MCF 10A (cell line): ENCODE measurements at regions of chr11 and their contacts with region 1.

Region 1: DNA sequence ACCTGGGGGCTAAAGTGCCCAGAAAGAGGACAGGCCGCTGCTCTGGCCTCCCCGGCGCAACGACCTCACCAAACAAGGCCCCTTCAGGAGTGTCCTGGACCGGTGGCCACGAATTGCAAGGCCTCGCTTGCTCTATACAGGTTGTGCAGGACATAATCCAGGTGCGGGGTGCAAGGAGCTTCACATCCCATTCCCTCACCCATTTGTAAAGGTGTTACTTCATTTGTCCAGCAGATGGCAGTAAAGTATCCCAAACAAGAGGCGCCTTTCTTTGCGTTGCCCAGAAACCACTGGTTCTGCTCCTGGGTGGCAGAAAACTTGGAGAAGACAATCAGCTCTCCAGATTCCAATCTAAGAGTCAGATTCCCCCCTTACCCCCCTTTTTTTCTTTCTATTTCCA is 35.9 kb upstream of the PRDM11 start:
- DNase-seq: peak; percentile 81
- H3K4me3 Mint-ChIP-seq: no peak overlapping the region
- H3K27ac Mint-ChIP-seq: no peak overlapping the region
- H3K4me1 Mint-ChIP-seq: no peaks in the 10 kb centered on the region
- H3K27me3 Mint-ChIP-seq: peaks cover 32% of the 10 kb centered on the region
- CTCF ChIP-seq: peak; percentile 61

Region 2: GRCh38 chr11:45180179-45180842 is 69.7 kb after region 1 on chr11:
- CTCF ChIA-PET with region 1: interaction called, 3 read pairs
- POLR2A ChIA-PET with region 1: no interaction called
- intact Hi-C with region 1: loop called (anchors 5 kb)
- DNase-seq: peak; percentile 48
- H3K4me3 Mint-ChIP-seq: peak overlapping the region; percentile 65
- H3K27ac Mint-ChIP-seq: peak overlapping the region; percentile 47
- H3K4me1 Mint-ChIP-seq: no peaks in the 10 kb centered on the region
- H3K27me3 Mint-ChIP-seq: no peaks in the 10 kb centered on the region
- CTCF ChIP-seq: peak; percentile 32

Region 3: GRCh38 chr11:45217991-45218390 is 107.4 kb after region 1 on chr11:
- CTCF ChIA-PET with region 1: no interaction called
- POLR2A ChIA-PET with region 1: no interaction called
- intact Hi-C with region 1: no loop called
- DNase-seq: no peak
- H3K4me3 Mint-ChIP-seq: no peak overlapping the region
- H3K27ac Mint-ChIP-seq: no peak overlapping the region
- H3K4me1 Mint-ChIP-seq: no peaks in the 10 kb centered on the region
- H3K27me3 Mint-ChIP-seq: no peaks in the 10 kb centered on the region
- CTCF ChIP-seq: no peak

Region 4: GRCh38 chr11:45285930-45286632 is 175.5 kb after region 1 on chr11 and contains the start of gene SYT13:
- CTCF ChIA-PET with region 1: interaction called, 56 read pairs
- POLR2A ChIA-PET with region 1: interaction called, 5 read pairs
- intact Hi-C with region 1: no loop called
- DNase-seq: no peak
- H3K4me3 Mint-ChIP-seq: no peak within 1 kb of the TSS
- H3K27ac Mint-ChIP-seq: no peak within 1 kb of the TSS
- H3K4me1 Mint-ChIP-seq: peaks cover 6% of the 10 kb centered on the region
- H3K27me3 Mint-ChIP-seq: peaks cover 50% of the 10 kb centered on the region
- CTCF ChIP-seq: no peak
- total RNA-seq, gene SYT13: not detected in 2 replicates

Region 5: DNA sequence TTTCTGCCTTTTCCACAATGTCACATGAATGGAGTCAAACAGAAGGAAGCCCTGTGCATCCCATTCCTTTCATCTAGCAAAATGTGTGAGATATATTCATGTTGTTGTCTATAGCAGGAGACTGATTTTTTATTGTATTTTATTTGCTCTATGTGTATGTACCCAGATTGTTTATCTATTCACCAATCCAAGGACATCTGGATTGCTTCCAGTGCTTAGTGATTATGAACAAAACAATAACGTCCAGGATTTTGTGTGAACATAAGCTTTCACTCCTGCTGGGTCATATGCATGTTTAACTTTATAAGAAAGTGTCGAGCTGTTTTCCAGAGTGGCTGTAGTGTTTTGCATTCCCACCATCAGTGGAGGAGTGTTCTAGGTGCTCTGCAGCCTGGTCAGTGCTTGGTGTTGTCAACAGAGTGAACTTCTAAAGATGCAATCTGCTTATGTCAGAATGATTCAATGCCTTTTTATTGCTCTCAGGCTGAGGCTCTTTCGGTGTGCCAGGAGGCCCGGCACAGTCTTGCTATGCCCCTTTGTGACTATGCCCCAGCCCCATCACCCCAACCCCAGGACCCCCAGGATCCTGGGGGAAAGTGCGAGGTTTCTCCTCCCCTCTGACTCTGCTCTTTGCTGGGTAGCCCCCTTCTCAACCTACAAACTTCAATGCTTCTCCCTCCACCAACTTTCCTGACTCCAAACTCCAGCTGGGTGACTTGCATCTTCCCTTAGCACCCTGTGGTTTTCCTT is 195.5 kb after region 1 on chr11:
- CTCF ChIA-PET with region 1: interaction called, 10 read pairs
- POLR2A ChIA-PET with region 1: no interaction called
- intact Hi-C with region 1: no loop called
- DNase-seq: no peak
- H3K4me3 Mint-ChIP-seq: no peak overlapping the region
- H3K27ac Mint-ChIP-seq: no peak overlapping the region
- H3K4me1 Mint-ChIP-seq: no peaks in the 10 kb centered on the region
- H3K27me3 Mint-ChIP-seq: peaks cover 65% of the 10 kb centered on the region
- CTCF ChIP-seq: no peak

Region 6: GRCh38 chr11:45332276-45332934 is 221.8 kb after region 1 on chr11:
- CTCF ChIA-PET with region 1: interaction called, 121 read pairs
- POLR2A ChIA-PET with region 1: interaction called, 3 read pairs
- intact Hi-C with region 1: loop called (anchors 1 kb)
- DNase-seq: peak; percentile 52
- H3K4me3 Mint-ChIP-seq: no peak overlapping the region
- H3K27ac Mint-ChIP-seq: no peak overlapping the region
- H3K4me1 Mint-ChIP-seq: peaks cover 6% of the 10 kb centered on the region
- H3K27me3 Mint-ChIP-seq: peaks cover 20% of the 10 kb centered on the region
- CTCF ChIP-seq: peak; percentile 84